Activated CD4-positive, alpha-beta T cell treated with anti-CD3 and anti-CD28 coated beads, Interleukin-2, amount 10 ng/mL, durations not matched to agents 24 days and 14 days (primary cell): ENCODE measurements at regions of chr6 and their contacts with region 1.

Region 1: DNA sequence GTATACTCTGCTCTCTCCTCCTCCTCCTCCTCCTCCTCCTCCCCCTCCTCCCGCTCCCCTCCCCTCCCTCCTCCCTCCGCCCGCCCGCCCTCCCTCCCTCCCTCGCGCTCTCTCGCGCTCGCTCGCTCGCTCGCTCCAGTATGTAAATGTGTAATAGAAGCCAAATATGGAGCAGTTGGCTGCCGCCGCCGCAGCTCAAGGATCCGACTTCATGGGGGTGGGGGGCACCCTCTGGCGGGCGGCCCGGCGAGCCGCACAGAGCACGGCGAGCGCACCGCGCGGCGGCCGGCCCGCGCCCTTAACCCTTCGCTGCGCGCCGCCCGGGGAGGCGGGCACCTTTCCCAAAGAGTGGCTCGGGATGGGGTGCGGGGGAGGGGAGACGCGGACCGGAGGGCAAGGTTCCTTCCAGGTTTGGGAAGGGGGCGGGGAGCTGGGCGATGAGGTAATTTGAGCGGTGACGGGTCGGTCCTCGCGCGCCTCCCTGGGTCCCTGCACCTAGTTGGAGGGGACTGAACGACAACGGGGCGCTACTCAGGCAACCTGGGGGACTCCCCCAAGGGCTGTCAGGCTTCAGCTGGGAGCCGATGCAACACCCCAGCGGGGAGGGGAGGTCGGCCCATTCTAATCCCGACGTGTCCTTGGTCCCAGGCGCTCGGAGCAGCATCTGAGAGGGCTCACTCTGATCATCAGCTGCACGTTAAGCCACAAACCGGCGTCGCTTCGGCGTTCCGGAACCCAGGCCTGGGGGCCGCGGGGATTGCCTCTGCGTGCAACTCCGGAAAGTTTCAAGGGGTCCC is 409 bp upstream of the ATXN1 start:
- DNase-seq: peak; percentile 95
- H3K4me3 Mint-ChIP-seq: peak overlapping the region; percentile 99
- H3K27ac Mint-ChIP-seq: peak overlapping the region; percentile 100
- H3K4me1 Mint-ChIP-seq: peaks cover 56% of the 10 kb centered on the region
- H3K27me3 Mint-ChIP-seq: no peaks in the 10 kb centered on the region

Region 2: GRCh38 chr6:16332175-16332542 is 429.5 kb before region 1 on chr6:
- intact Hi-C with region 1: loop called (anchors 1 kb)
- DNase-seq: peak; percentile 94
- H3K4me3 Mint-ChIP-seq: no peak overlapping the region
- H3K27ac Mint-ChIP-seq: no peak overlapping the region
- H3K4me1 Mint-ChIP-seq: peaks cover 3% of the 10 kb centered on the region
- H3K27me3 Mint-ChIP-seq: no peaks in the 10 kb centered on the region

Region 3: GRCh38 chr6:16514249-16514648 is 247.4 kb before region 1 on chr6:
- intact Hi-C with region 1: loop called (anchors 1 kb)
- DNase-seq: peak; percentile 82
- H3K4me3 Mint-ChIP-seq: peak overlapping the region; percentile 52
- H3K27ac Mint-ChIP-seq: peak overlapping the region; percentile 84
- H3K4me1 Mint-ChIP-seq: peaks cover 70% of the 10 kb centered on the region
- H3K27me3 Mint-ChIP-seq: no peaks in the 10 kb centered on the region

Region 4: GRCh38 chr6:16657768-16658167 is 103.9 kb before region 1 on chr6:
- intact Hi-C with region 1: loop called (anchors 1 kb)
- DNase-seq: peak; percentile 75
- H3K4me3 Mint-ChIP-seq: peak overlapping the region; percentile 50
- H3K27ac Mint-ChIP-seq: peak overlapping the region; percentile 83
- H3K4me1 Mint-ChIP-seq: peaks cover 67% of the 10 kb centered on the region
- H3K27me3 Mint-ChIP-seq: no peaks in the 10 kb centered on the region

Region 5: DNA sequence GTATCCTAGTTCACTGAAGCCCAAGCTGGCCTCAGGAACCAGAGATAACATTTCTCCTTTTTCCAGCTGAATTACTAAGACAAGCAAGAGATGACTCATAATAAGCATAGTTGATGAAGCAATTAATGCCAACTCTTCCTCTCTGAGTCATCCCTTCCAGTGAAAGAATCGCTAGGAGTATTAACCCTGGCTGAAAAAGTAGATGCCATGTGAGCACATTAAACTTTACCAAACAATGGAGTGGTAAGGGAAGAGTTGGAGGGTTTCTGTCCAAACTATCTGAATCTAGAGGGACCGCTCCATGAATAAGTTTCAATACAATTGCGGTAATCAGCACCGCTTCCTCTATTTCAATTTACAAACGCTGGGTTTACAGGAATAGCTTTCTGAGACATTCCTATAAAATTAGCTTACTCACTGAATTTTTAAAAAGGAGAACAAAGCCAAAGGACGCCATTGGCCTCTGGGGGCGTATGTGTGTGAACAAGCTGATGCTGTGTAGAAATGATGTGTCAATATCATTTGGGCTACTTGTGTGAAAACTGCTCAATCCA is 48.7 kb before region 1 on chr6:
- intact Hi-C with region 1: loop called (anchors 1 kb)
- DNase-seq: no peak
- H3K4me3 Mint-ChIP-seq: peak overlapping the region; percentile 82
- H3K27ac Mint-ChIP-seq: peak overlapping the region; percentile 92
- H3K4me1 Mint-ChIP-seq: peaks cover 43% of the 10 kb centered on the region
- H3K27me3 Mint-ChIP-seq: no peaks in the 10 kb centered on the region

Region 6: GRCh38 chr6:16723826-16724225 is 37.8 kb before region 1 on chr6:
- intact Hi-C with region 1: no loop called
- DNase-seq: no peak
- H3K4me3 Mint-ChIP-seq: no peak overlapping the region
- H3K27ac Mint-ChIP-seq: peak overlapping the region; percentile 56
- H3K4me1 Mint-ChIP-seq: peaks cover 49% of the 10 kb centered on the region
- H3K27me3 Mint-ChIP-seq: no peaks in the 10 kb centered on the region

Region 7: DNA sequence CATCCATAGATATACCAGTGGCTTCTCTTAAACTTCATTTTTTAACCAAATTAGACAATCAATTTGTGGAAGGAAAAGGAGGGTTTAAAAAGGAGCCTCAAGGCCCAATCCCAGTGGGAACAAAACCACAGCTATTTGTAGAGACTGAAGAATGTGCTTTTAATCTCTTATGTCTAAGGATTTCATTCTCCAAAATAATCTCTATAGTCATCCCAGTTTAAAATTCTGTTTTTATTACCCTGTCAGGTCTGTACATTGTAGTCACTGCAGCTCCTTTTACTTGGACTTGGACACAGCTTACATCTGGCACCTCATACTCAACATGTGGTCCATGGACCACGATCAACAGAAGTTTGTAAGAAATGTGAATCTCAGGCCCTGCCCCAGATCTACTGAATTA is 188.0 kb after region 1 on chr6:
- intact Hi-C with region 1: loop called (anchors 2 kb)
- DNase-seq: no peak
- H3K4me3 Mint-ChIP-seq: no peak overlapping the region
- H3K27ac Mint-ChIP-seq: no peak overlapping the region
- H3K4me1 Mint-ChIP-seq: peaks cover 19% of the 10 kb centered on the region
- H3K27me3 Mint-ChIP-seq: peaks cover 22% of the 10 kb centered on the region